Mucosa of descending colon (tissue), 3 donors: ENCODE measurements at regions of chr10 and their contacts with region 1.

Region 1: GRCh38 chr10:52215745-52216361 is 98.2 kb upstream of the DKK1 start:
- DNase-seq: peak in 1 of 3 donors; percentile 62
- ATAC-seq: peak; percentile 75
- H3K4me3 ChIP-seq: no peak overlapping the region
- H3K4me1 ChIP-seq: peaks cover 19% of the 10 kb centered on the region
- CTCF ChIP-seq: peak; percentile 49

Region 2: GRCh38 chr10:50990568-50991185 is 1225.2 kb before region 1 on chr10:
- intact Hi-C with region 1: loop called in 1 of 2 experiments (anchors 10 kb)
- DNase-seq: peak; percentile 57 to 75 (median 64)
- ATAC-seq: peak; percentile 45
- H3K4me3 ChIP-seq: peak overlapping the region; percentile 51
- H3K4me1 ChIP-seq: peaks cover 9% of the 10 kb centered on the region
- CTCF ChIP-seq: no peak

Region 3: DNA sequence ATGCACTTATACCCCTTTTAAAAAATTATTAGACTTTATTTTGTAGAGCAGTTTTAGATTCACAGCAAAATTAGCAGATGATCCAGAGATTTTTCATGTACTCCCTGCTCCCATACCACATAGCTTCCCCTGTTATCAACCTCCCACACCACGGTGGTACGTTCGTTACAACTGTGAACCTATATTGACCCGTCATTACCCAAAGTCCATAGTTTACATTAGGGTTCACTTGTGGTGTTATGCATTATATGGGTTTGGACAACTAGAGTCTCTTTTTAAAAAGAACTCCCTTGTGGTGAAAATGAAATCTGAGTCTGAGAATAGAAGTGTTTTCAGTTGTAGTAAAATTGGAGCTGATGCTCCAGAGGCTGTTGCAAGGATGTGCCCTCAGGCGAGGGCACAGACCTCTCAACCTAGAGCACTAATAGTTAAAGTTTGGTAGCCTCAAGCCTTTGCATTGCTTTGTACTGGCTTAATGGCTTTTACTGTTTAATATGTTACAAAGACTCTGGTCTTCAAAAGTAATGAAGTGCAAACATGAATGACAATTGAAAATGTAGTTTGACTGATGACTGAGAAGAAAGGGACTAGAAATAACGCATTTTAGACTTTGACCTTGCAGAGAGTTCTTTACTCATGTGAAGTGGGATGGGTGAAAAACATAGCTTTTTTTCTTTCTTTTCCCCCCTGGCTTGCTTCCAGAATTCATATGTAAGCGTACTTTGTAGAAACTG is 485.9 kb before region 1 on chr10:
- intact Hi-C with region 1: no loop called
- DNase-seq: no peak
- ATAC-seq: peak; percentile 31
- H3K4me3 ChIP-seq: no peak overlapping the region
- H3K4me1 ChIP-seq: no peaks in the 10 kb centered on the region
- CTCF ChIP-seq: no peak

Region 4: GRCh38 chr10:52146766-52147165 is 69.1 kb before region 1 on chr10:
- intact Hi-C with region 1: no loop called
- DNase-seq: no peak
- ATAC-seq: no peak
- H3K4me3 ChIP-seq: no peak overlapping the region
- H3K4me1 ChIP-seq: no peaks in the 10 kb centered on the region
- CTCF ChIP-seq: no peak